ENCODE measurements at regions of chr20 and their contacts with region 1.

Region 1: GRCh38 chr20:32787168-32787567 is 25.0 kb downstream of the DNMT3B start:
- DNase-seq: no peak
- ATAC-seq: no peak
- H3K4me3 ChIP-seq: no peak overlapping the region
- H3K4me3 Mint-ChIP-seq: no peak overlapping the region
- H3K27ac ChIP-seq: no peak overlapping the region
- H3K27ac Mint-ChIP-seq: no peak overlapping the region
- H3K4me1 ChIP-seq: peaks cover under 1 to 9% of the 10 kb centered on the region in 2 experiments
- H3K4me1 Mint-ChIP-seq: peaks cover 12 to 15% (median 14%) of the 10 kb centered on the region in 3 donors
- H3K27me3 ChIP-seq: no peaks in the 10 kb centered on the region
- H3K27me3 Mint-ChIP-seq: no peaks in the 10 kb centered on the region

Region 2: DNA sequence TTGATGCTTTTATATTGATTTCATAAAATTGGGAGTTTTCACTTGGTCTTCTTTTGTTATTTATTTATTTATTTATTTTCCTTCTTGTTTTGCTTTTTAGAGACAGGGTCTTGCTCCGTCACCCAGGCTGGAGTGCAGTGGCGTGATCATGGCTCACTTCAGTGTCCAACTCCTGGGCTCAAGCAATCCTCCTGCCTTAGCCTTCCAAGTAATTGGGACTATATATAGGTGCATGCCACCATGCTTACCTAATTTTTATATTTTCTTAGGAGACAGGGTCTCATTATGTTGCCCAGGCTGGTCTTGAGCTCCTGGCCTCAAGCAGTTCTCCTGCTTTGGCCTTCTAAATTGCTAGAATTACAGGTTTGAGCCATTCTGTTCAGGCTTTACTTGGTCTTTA is 1006.3 kb before region 1 on chr20:
- CTCF ChIA-PET with region 1: no interaction called
- POLR2A ChIA-PET with region 1: interaction called in 1 of 2 experiments, 10 read pairs
- DNase-seq: no peak
- ATAC-seq: no peak
- H3K4me3 ChIP-seq: no peak overlapping the region
- H3K4me3 Mint-ChIP-seq: no peak overlapping the region
- H3K27ac ChIP-seq: no peak overlapping the region
- H3K27ac Mint-ChIP-seq: no peak overlapping the region
- H3K4me1 ChIP-seq: no peaks in the 10 kb centered on the region
- H3K4me1 Mint-ChIP-seq: no peaks in the 10 kb centered on the region
- H3K27me3 ChIP-seq: no peaks in the 10 kb centered on the region
- H3K27me3 Mint-ChIP-seq: no peaks in the 10 kb centered on the region

Region 3: GRCh38 chr20:32660661-32661060 is 126.5 kb before region 1 on chr20:
- CTCF ChIA-PET with region 1: no interaction called
- POLR2A ChIA-PET with region 1: no interaction called
- DNase-seq: no peak
- ATAC-seq: no peak
- H3K4me3 ChIP-seq: no peak overlapping the region
- H3K4me3 Mint-ChIP-seq: no peak overlapping the region
- H3K27ac ChIP-seq: no peak overlapping the region
- H3K27ac Mint-ChIP-seq: no peak overlapping the region
- H3K4me1 ChIP-seq: peaks cover 0 to 8% of the 10 kb centered on the region in 2 experiments
- H3K4me1 Mint-ChIP-seq: peaks cover 3 to 5% (median 4%) of the 10 kb centered on the region in 3 donors
- H3K27me3 ChIP-seq: peaks cover 0 to 12% of the 10 kb centered on the region in 2 experiments
- H3K27me3 Mint-ChIP-seq: no peaks in the 10 kb centered on the region